Heart right ventricle (tissue), 16 donors: ENCODE measurements at regions of chr10 and their contacts with region 1.

Region 1: GRCh38 chr10:511101-511848 is 178.2 kb downstream of the DIP2C start:
- DNase-seq: peak; percentile 92 to 95
- ATAC-seq: peak; percentile 89 to 95 (median 94)
- H3K4me3 ChIP-seq: peak overlapping the region in 1 of 10 donors; percentile 2
- H3K27ac ChIP-seq: peak overlapping the region in 8 of 10 donors; percentile 5 to 64 (median 52)
- H3K4me1 ChIP-seq: peaks cover 8 to 48% (median 24%) of the 10 kb centered on the region in 9 donors
- H3K27me3 ChIP-seq: no peaks in the 10 kb centered on the region
- CTCF ChIP-seq: peak; percentile 84 to 99 (median 98)

Region 2: GRCh38 chr10:598415-599170 is 87.3 kb after region 1 on chr10:
- intact Hi-C with region 1: loop called in 2 of 10 experiments (anchors 5 kb)
- DNase-seq: no peak
- ATAC-seq: no peak
- H3K4me3 ChIP-seq: no peak overlapping the region
- H3K27ac ChIP-seq: no peak overlapping the region
- H3K4me1 ChIP-seq: peaks cover 8 to 55% (median 25%) of the 10 kb centered on the region in 9 donors
- H3K27me3 ChIP-seq: no peaks in the 10 kb centered on the region
- CTCF ChIP-seq: no peak

Region 3: GRCh38 chr10:659688-660141 is 148.4 kb after region 1 on chr10:
- intact Hi-C with region 1: loop called in 1 of 10 experiments (anchors 10 kb)
- DNase-seq: no peak
- ATAC-seq: peak in 2 of 8 donors; percentile 31 to 34
- H3K4me3 ChIP-seq: no peak overlapping the region
- H3K27ac ChIP-seq: peak overlapping the region in 9 of 10 donors; percentile 39 to 73 (median 65)
- H3K4me1 ChIP-seq: peaks cover 13 to 65% (median 43%) of the 10 kb centered on the region in 9 donors
- H3K27me3 ChIP-seq: no peaks in the 10 kb centered on the region
- CTCF ChIP-seq: no peak

Region 4: GRCh38 chr10:689433-690371 is 178.4 kb after region 1 on chr10 and contains the start of gene DIP2C:
- intact Hi-C with region 1: loop called in 8 of 10 experiments (anchors 2 to 10 kb)
- DNase-seq: peak; percentile 72 to 81
- ATAC-seq: peak; percentile 74 to 90 (median 83)
- H3K4me3 ChIP-seq: peak within 1 kb of the TSS; percentile 62 to 92 (median 84)
- H3K27ac ChIP-seq: peak within 1 kb of the TSS; percentile 77 to 94 (median 88)
- H3K4me1 ChIP-seq: peaks cover 5 to 24% (median 16%) of the 10 kb centered on the region in 9 donors
- H3K27me3 ChIP-seq: peaks cover 0 to 12% (median 0%) of the 10 kb centered on the region in 7 donors
- CTCF ChIP-seq: no peak
- total RNA-seq, gene DIP2C: 27.6 to 48.2 (median 35.4) TPM

Region 5: GRCh38 chr10:794466-794865 is 283.2 kb after region 1 on chr10:
- intact Hi-C with region 1: loop called in 8 of 10 experiments (anchors 1 to 5 kb)
- DNase-seq: no peak
- ATAC-seq: peak in 6 of 8 donors; percentile 41 to 90 (median 50)
- H3K4me3 ChIP-seq: no peak overlapping the region
- H3K27ac ChIP-seq: no peak overlapping the region
- H3K4me1 ChIP-seq: peaks cover 0 to 6% (median 3%) of the 10 kb centered on the region in 9 donors
- H3K27me3 ChIP-seq: no peaks in the 10 kb centered on the region
- CTCF ChIP-seq: peak in 8 of 9 donors; percentile 7 to 45 (median 31)

Region 6: GRCh38 chr10:987870-988666 is 476.8 kb after region 1 on chr10 and contains the start of gene GTPBP4:
- intact Hi-C with region 1: loop called in 1 of 10 experiments (anchors 5 kb)
- DNase-seq: peak; percentile 98 to 99
- ATAC-seq: peak; percentile 98 to 100 (median 99)
- H3K4me3 ChIP-seq: peak within 1 kb of the TSS; percentile 56 to 90 (median 80)
- H3K27ac ChIP-seq: peak within 1 kb of the TSS; percentile 86 to 97 (median 94)
- H3K4me1 ChIP-seq: peaks cover 9 to 39% (median 29%) of the 10 kb centered on the region in 9 donors
- H3K27me3 ChIP-seq: no peaks in the 10 kb centered on the region
- CTCF ChIP-seq: peak in 6 of 9 donors; percentile 7 to 57 (median 38)
- total RNA-seq, gene GTPBP4: 25.0 to 41.4 (median 29.4) TPM